Activated T-helper 1 cell treated with anti-CD3 and anti-CD28 coated beads, Interleukin-12 subunit alpha, Interleukin-12 subunit beta, Interleukin-2, Interleukin-4 antibody, amounts not matched to agents 30 ng/mL and 10 ng/mL and 1 ng/mL, durations not matched to agents 14 hours and 24 hours and 36 hours (primary cell): ENCODE measurements at regions of chr19 and their contacts with region 1.

Region 1: DNA sequence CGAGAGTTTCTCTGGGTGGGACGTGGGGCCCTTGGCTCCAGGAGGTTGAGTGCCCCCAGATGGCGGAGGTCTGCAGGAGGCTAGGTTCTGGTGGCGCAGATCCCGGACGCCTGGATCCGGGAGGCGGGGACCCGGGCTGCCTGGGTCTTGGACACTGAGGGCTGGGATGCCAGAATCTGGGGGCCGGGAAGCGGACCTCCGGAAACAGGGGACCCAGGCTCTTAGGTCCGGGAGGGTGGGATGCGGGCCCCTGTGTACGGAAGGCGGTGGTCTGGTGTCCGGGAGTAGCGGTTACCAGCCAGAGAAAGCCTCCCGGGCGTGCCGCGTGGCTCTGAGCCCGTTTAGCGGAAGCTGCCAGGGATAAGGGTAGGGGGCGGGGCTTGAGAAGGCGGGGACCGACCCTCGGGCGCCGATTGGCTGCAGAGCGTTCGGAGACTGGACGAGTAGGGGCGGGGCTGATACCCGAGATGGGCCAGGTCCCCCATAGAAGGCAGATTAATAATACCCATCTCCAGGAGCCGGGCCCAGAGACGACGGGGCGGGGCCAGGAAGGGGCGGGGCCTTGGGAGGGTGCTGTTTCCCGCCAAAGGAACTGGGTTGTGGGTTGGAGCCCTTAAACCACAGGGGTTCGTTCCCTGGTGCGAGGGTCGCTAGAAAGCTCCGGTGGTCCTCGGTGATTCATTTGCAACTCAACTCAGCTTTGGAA is at the start of gene SLC1A5:
- DNase-seq: peak; percentile 95
- H3K4me3 Mint-ChIP-seq: peak within 1 kb of the TSS; percentile 95
- H3K27ac Mint-ChIP-seq: peak within 1 kb of the TSS; percentile 92
- H3K4me1 Mint-ChIP-seq: peaks cover 57% of the 10 kb centered on the region
- H3K27me3 Mint-ChIP-seq: peaks cover 2% of the 10 kb centered on the region
- total RNA-seq, gene SLC1A5: 264 and 267 TPM in 2 replicates

Region 2: DNA sequence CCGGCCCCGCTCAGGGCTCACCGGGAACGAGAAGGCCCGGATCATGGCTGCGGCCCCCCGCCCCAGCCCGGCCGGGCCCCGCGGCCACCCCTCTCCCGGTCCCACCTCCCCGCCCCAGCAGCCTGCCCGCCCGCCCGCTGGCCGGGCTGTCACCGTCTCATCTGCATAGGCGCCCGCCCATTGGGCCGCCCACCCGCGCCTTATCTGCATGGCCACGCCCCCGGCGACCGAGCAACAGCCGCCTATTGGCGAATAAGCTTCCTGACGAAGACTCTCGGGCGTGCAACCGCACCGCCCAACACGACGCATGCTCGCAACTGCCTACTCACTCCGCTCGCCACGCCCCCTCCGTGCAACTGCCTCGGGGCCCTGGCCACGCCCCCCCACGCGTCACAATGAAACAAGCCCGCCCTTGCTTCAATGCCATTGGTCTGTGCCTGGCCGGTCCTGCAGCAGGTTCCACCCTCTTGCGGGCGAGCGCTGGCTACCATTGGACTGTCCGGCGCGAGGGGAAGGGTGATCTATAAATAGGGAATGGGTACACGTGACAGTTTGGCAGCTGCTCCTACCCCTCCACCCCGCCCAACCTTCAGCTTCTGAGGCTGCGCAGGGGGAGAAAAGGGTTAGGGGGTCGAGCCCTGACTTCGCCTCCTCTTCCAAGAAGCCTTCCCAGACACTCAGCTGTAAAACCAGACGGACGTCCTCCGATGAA is 127.2 kb before region 1 on chr19 and contains the start of gene DACT3:
- intact Hi-C with region 1: loop called (anchors 1 kb)
- DNase-seq: peak; percentile 100
- H3K4me3 Mint-ChIP-seq: peak within 1 kb of the TSS; percentile 72
- H3K27ac Mint-ChIP-seq: peak within 1 kb of the TSS; percentile 81
- H3K4me1 Mint-ChIP-seq: peaks cover 19% of the 10 kb centered on the region
- H3K27me3 Mint-ChIP-seq: peaks cover 43% of the 10 kb centered on the region
- total RNA-seq, gene DACT3: 4.3 and 5.7 TPM in 2 replicates

Region 3: GRCh38 chr19:46746281-46747013 is 42.0 kb before region 1 on chr19 and contains the start of gene STRN4:
- intact Hi-C with region 1: loop called (anchors 1 kb)
- DNase-seq: peak; percentile 31
- H3K4me3 Mint-ChIP-seq: peak within 1 kb of the TSS; percentile 95
- H3K27ac Mint-ChIP-seq: peak within 1 kb of the TSS; percentile 91
- H3K4me1 Mint-ChIP-seq: peaks cover 46% of the 10 kb centered on the region
- H3K27me3 Mint-ChIP-seq: no peaks in the 10 kb centered on the region
- total RNA-seq, gene STRN4: 106 and 116 TPM in 2 replicates

Region 4: DNA sequence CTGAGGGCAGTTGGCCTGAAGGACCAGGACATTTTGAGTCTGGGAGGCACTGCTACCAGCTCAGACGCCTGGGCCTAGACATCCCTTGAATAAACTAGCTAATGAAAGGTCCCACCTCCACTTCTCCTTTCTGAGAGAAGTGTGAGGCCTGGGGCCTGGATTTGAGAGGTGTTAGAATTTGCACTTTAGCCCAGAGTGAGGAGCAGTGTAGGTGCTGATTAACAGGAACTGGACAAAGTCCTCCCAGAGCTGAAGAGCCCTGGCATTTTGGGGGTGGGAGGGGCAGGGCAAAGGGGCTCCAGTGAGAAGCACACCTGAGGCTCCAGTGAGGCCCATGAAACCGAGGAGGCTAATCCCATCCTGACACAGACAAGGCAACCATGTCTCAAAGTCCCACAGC is 15.1 kb after region 1 on chr19:
- intact Hi-C with region 1: no loop called
- DNase-seq: no peak
- H3K4me3 Mint-ChIP-seq: no peak overlapping the region
- H3K27ac Mint-ChIP-seq: no peak overlapping the region
- H3K4me1 Mint-ChIP-seq: no peaks in the 10 kb centered on the region
- H3K27me3 Mint-ChIP-seq: no peaks in the 10 kb centered on the region

Region 5: DNA sequence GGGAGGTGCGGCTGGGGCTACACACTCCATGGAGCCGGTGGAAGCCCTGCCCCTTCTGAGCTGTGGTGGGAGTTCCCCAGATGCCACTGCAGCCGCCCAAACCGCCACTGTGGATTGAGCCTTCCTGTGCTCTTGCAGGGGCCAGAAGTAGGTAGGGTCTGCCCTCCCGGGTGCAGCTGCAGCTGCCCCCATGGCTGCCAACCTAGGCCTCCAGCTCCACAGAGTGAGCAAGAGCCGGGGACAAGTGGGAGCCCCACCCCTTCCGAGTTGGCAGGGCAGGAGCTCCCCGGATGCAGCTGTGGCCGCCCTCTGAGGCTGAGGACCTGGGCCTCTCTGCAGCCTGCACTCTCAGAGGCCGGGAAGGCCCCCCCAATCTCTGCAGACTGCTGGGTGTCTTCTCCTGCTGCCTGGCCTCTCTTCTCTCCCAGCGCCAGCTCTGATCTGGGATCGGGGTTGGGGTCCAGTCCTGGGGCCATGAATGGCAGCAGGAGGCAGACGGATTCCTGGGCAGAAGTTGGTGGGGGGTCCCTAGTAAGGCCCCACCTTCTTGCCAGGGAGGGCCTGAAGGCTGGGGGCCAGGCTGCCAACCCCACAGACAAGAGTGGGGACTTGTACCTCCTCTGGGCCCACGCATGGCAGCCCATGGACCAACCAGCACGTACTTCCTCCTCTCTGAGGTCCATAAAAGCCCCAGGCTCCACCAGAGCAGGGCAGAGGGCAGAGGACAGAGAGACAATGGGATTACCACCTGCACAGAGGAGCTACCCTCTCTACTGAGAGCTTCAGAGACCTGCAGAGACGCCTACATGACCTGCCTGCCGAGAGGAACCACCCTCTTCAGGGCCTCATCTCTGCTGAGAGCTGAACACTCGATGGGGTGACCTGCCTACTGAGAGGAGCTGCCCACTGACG is 33.3 kb after region 1 on chr19:
- intact Hi-C with region 1: loop called (anchors 1 kb)
- DNase-seq: peak; percentile 57
- H3K4me3 Mint-ChIP-seq: no peak overlapping the region
- H3K27ac Mint-ChIP-seq: peak overlapping the region; percentile 61
- H3K4me1 Mint-ChIP-seq: peaks cover 43% of the 10 kb centered on the region
- H3K27me3 Mint-ChIP-seq: no peaks in the 10 kb centered on the region

Region 6: DNA sequence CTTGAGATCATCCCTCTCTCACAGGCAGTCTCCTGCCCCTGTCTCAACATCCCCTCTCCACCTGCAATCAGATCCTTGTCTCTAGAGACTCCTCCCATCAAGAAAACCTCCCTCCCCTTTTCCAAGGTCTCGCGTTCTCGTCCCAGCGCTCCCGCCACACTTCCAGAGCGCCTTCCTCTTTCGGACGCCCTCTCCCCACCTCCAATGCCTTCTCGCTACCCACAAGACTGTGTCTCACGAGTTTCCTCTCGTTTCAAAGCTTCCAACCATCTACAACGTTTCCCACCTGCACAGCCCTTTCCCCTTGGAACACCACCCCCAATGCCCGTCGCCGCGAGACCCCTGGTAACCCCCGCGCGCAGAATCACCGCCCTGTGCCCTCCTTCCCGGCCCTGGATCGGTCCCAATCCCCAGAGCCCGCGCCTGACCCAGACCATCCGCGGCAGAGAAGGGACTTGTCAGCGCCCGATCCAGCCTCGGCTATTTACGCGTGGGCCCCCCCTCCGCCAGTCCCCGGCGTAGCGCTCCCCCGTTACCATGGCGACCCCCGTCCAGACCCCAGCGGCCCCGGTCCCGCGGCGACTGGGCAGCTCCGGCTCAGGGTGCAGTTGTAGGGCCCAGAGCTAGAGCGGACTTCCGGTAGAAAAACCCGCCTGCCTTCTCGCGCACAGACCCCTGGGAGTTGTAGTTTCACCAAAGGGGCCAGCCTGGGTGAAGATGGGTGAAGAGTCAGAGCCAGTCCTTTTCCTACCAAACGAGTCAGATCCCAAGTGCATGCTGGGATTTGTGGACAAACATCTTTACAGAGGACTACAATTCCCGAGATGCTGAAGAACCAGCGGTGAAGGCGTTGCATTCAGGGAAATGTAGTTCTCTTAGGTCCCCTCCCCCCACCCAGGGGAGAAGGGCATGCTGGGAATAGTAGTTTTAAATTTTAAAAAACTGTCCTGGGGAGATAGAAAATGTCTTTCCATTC is 62.1 kb after region 1 on chr19 and contains the start of gene AP2S1:
- intact Hi-C with region 1: loop called (anchors 2 kb)
- DNase-seq: peak; percentile 92
- H3K4me3 Mint-ChIP-seq: peak within 1 kb of the TSS; percentile 92
- H3K27ac Mint-ChIP-seq: peak within 1 kb of the TSS; percentile 86
- H3K4me1 Mint-ChIP-seq: peaks cover 24% of the 10 kb centered on the region
- H3K27me3 Mint-ChIP-seq: peaks cover 6% of the 10 kb centered on the region
- total RNA-seq, gene AP2S1: 96.4 and 98.1 TPM in 2 replicates

Region 7: DNA sequence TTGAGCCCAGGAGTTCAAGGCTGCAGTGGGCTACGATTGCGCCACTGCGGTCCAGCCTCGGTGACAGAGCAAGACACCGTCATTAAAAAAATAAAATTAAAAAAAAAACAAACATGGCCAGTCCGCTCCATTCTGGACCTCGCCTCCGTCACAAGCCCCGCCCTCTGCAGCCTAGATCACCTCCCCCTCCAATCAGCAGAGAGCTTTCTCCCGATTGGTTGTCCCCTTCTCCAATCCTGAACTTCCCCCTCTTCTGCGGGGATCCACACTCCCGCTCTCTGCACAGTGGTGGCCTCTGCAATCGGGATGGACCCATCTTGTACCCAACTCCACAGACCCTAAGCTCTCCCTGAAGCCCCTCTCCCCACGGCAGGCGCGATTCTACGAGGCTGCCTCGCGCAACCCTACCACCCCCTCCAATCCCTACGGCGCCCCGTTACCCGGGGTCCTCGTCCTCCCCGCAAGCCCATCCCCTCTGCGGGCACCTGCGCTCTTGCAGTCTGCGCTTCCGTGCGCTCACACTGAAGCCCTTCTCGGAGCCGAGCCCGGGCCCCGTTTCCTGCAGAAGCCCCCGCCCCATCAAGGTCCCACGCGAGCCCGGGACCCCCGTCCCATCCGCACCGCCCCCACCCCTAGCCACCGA is 259.5 kb after region 1 on chr19:
- intact Hi-C with region 1: loop called (anchors 1 kb)
- DNase-seq: peak; percentile 74
- H3K4me3 Mint-ChIP-seq: peak overlapping the region; percentile 99
- H3K27ac Mint-ChIP-seq: peak overlapping the region; percentile 98
- H3K4me1 Mint-ChIP-seq: peaks cover 12% of the 10 kb centered on the region
- H3K27me3 Mint-ChIP-seq: no peaks in the 10 kb centered on the region

Region 8: DNA sequence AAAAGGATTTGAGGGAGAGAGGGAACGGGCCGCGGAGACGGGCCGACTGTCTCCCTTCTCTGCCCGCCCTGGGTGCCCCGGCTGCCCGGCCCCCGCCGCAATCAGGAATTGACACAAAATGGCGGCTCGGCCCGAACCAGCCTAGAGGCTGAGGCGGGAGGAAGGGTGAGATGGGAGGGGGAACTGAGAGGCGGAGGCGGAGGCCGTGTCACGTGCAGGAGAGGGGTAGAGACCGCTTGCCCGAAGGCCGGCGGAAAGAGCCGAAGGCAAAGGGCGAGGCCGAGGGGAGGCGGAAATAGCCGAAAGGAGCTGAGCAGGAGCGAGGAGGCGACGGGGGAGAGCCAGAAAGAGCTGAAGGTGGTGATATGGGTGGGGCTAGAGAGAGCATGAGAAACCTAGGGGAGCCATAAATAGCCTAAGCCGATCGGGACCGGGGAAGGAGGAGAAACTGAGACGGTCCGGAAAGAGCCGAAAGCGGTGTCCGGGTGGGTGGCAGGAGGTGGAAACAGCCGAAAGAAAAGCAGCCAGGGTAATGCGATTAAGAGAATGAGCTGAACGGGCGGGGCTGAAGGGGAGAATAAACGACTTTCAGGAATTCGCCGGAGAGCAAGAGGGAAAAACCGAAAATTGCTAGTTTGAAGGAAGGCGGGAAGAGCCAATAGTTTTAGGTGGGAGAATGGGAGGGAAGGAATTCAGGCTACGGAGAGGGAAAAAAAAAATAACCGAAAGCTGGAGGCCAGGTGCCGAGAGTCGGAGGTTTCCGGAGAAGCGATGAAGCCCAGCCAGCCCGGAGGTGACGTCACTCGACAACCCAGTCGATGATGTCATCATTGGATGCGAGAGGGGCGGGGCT is 324.8 kb after region 1 on chr19 and contains the start of gene ZC3H4:
- intact Hi-C with region 1: loop called (anchors 5 kb)
- DNase-seq: peak; percentile 100
- H3K4me3 Mint-ChIP-seq: peak within 1 kb of the TSS; percentile 92
- H3K27ac Mint-ChIP-seq: peak within 1 kb of the TSS; percentile 99
- H3K4me1 Mint-ChIP-seq: peaks cover 33% of the 10 kb centered on the region
- H3K27me3 Mint-ChIP-seq: no peaks in the 10 kb centered on the region
- total RNA-seq, gene ZC3H4: 111 and 114 TPM in 2 replicates

Region 9: GRCh38 chr19:48746738-48747575 is 1958.5 kb after region 1 on chr19 and contains the start of gene IZUMO1:
- intact Hi-C with region 1: no loop called
- DNase-seq: peak; percentile 62
- H3K4me3 Mint-ChIP-seq: peak within 1 kb of the TSS; percentile 63
- H3K27ac Mint-ChIP-seq: peak within 1 kb of the TSS; percentile 12
- H3K4me1 Mint-ChIP-seq: peaks cover 17% of the 10 kb centered on the region
- H3K27me3 Mint-ChIP-seq: peaks cover 4% of the 10 kb centered on the region
- total RNA-seq, gene IZUMO1: 0.37 TPM in 1 of 2 replicates, not detected in the other